CD4-positive, alpha-beta memory T cell (primary cell): ENCODE measurements at regions of chr13 and their contacts with region 1.

Region 1: DNA sequence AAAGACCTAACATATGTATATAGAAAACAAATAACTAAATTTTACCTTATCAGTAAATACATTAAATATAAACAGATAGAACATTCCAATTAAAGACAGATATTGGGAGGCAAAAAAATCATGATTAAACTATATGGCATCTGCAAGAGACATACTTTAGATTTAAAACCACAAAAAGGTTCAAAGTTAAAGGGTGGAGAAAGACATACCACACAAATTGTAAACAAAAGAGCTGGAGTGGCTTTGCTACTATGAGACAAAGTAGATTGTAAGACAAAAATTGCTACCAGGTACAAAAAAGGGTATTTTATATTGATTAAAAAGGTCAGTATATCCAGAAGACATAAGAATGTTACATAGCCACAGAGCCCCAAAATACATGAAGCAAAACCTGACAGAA is 200.2 kb downstream of the KCNRG start:
- DNase-seq: no peak
- H3K4me3 ChIP-seq: no peak overlapping the region
- H3K4me3 Mint-ChIP-seq: peak overlapping the region in 6 of 8 donors; percentile 1 to 58 (median 21)
- H3K27ac ChIP-seq: no peak overlapping the region
- H3K27ac Mint-ChIP-seq: peak overlapping the region in 3 of 7 donors; percentile 3 to 67 (median 51)
- H3K4me1 ChIP-seq: peaks cover 18% of the 10 kb centered on the region
- H3K4me1 Mint-ChIP-seq: peaks cover 16 to 24% (median 21%) of the 10 kb centered on the region in 4 donors
- H3K27me3 ChIP-seq: no peaks in the 10 kb centered on the region
- H3K27me3 Mint-ChIP-seq: no peaks in the 10 kb centered on the region

Region 2: GRCh38 chr13:50198508-50198907 is 16.9 kb before region 1 on chr13:
- CTCF ChIA-PET with region 1: no interaction called
- POLR2A ChIA-PET with region 1: no interaction called
- intact Hi-C with region 1: no loop called
- DNase-seq: no peak
- H3K4me3 ChIP-seq: no peak overlapping the region
- H3K4me3 Mint-ChIP-seq: no peak overlapping the region
- H3K27ac ChIP-seq: no peak overlapping the region
- H3K27ac Mint-ChIP-seq: no peak overlapping the region
- H3K4me1 ChIP-seq: peaks cover 2% of the 10 kb centered on the region
- H3K4me1 Mint-ChIP-seq: peaks cover 0 to 7% (median 2%) of the 10 kb centered on the region in 4 donors
- H3K27me3 ChIP-seq: no peaks in the 10 kb centered on the region
- H3K27me3 Mint-ChIP-seq: peaks cover 0 to 2% of the 10 kb centered on the region in 2 donors

Region 3: GRCh38 chr13:50255639-50256038 is 40.2 kb after region 1 on chr13:
- CTCF ChIA-PET with region 1: no interaction called
- POLR2A ChIA-PET with region 1: no interaction called
- intact Hi-C with region 1: loop called (anchors 5 kb)
- DNase-seq: peak in 4 of 5 donors; percentile 36 to 44 (median 40)
- H3K4me3 ChIP-seq: peak overlapping the region in 1 of 2 donors; percentile 13
- H3K4me3 Mint-ChIP-seq: peak overlapping the region in 7 of 8 donors; percentile 47 to 83 (median 69)
- H3K27ac ChIP-seq: no peak overlapping the region
- H3K27ac Mint-ChIP-seq: peak overlapping the region in 5 of 7 donors; percentile 31 to 91 (median 63)
- H3K4me1 ChIP-seq: peaks cover 53% of the 10 kb centered on the region
- H3K4me1 Mint-ChIP-seq: peaks cover 42 to 68% (median 57%) of the 10 kb centered on the region in 4 donors
- H3K27me3 ChIP-seq: no peaks in the 10 kb centered on the region
- H3K27me3 Mint-ChIP-seq: no peaks in the 10 kb centered on the region

Region 4: GRCh38 chr13:50376895-50377575 is 161.6 kb after region 1 on chr13:
- CTCF ChIA-PET with region 1: no interaction called
- POLR2A ChIA-PET with region 1: no interaction called
- intact Hi-C with region 1: no loop called
- DNase-seq: no peak
- H3K4me3 ChIP-seq: no peak overlapping the region
- H3K4me3 Mint-ChIP-seq: no peak overlapping the region
- H3K27ac ChIP-seq: no peak overlapping the region
- H3K27ac Mint-ChIP-seq: no peak overlapping the region
- H3K4me1 ChIP-seq: peaks cover 3% of the 10 kb centered on the region
- H3K4me1 Mint-ChIP-seq: peaks cover 2 to 13% (median 8%) of the 10 kb centered on the region in 4 donors
- H3K27me3 ChIP-seq: no peaks in the 10 kb centered on the region
- H3K27me3 Mint-ChIP-seq: no peaks in the 10 kb centered on the region